Motor neuron (in vitro differentiated cells): ENCODE measurements at regions of chr1 and their contacts with region 1.

Region 1: DNA sequence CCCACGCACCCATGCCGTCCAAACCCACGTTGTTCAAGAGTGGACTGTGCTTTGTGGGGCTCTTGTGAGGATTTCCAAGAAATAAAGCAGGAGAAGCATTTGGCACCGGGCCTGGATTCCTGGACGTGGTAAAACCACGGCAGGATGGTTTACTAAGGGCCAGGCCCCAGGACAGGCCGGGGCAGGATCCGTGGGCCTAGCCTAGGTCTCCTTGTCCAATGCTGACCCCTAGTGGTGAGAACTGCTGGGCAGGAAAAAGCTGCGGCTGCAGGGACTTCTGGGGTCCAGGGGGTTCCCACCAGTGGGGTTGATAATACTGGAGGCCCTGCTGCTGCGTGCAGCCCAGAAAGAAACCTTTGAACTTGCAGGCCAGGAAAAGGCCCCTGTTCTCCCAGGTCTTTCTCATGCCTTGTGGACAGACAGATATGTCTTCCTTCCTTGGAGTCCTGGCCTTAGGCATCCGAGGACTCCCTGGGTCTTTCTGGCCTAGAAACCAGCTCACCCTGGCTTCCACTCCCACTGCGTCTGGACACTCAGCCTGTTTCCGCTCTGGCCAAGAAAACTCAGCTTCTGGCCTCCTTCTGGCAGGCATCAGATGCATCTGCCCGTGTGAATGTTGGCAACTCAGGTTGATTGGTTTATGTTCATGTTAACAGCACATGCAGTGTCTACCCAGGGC is 106.9 kb upstream of the TMEM51 start:
- ATAC-seq: peak; percentile 83 to 92 (median 88)
- H3K4me3 ChIP-seq: no peak overlapping the region
- H3K27ac ChIP-seq: no peak overlapping the region
- H3K4me1 ChIP-seq: peaks cover 0 to 14% of the 10 kb centered on the region in 2 donors

Region 2: DNA sequence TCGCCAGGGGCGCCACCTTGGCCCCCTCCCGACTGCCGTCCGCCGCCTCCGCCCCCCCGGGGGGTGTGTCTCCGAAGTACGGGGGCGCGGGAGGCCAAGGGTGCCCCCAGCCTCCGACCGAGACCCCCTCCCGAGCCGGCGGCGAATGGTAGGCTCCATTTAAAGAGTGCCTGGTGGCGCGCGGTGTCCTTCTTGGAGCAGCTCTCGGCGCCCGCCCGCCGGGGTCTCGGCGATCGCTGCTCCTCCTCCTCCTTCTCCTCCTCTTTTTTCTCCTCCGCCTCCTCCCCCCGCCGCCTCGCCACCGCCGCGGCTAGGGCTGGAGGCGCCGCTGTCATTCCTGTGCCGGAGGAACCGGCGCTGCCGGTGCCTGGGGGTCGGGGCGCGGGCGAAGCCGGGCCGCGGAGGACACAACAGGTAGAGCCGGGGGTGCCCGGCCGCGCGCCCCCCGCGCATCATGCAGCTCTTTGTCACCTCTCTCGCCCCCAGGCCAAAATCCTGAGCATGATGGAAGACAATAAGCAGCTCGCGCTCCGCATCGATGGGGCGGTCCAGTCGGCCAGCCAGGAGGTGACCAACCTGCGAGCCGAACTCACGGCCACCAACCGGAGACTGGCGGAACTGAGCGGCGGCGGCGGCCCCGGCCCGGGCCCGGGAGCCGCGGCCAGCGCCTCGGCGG is 448.0 kb before region 1 on chr1 and contains the start of gene KAZN:
- in situ Hi-C with region 1: loop called in 2 of 9 experiments (anchors 25 kb)
- ATAC-seq: peak; percentile 48 to 78 (median 70)
- H3K4me3 ChIP-seq: peak within 1 kb of the TSS; percentile 73 to 90 (median 89)
- H3K27ac ChIP-seq: peak within 1 kb of the TSS; percentile 93 to 99
- H3K4me1 ChIP-seq: peaks cover 25 to 41% of the 10 kb centered on the region in 2 donors
- total RNA-seq, gene KAZN: 16.9 to 31.4 (median 21.4) TPM

Region 3: DNA sequence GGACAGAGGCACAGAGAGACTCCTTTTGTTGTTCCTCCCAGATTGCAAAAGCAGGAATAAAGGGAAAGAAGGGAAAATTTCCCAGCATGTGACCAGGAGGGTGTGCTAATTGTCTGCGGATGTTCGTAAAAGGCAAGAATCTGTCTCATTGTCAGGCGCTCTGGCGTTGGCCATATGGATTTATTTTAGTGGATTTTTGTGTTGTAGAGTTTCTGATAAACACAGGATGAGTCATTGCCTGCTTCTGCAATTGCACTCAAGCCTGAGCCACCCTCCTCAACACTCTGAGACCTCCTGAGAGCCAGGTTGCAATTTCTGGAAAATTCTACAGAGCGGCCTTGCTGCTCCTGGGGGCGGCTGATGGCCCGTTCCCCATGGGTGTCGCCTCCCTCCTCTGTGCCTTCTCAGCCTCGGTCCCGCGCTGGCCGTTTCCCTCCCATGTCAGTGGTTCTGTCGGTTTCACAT is 220.4 kb before region 1 on chr1:
- in situ Hi-C with region 1: loop called in 1 of 9 experiments (anchors 25 kb)
- ATAC-seq: peak; percentile 88 to 96 (median 94)
- H3K4me3 ChIP-seq: no peak overlapping the region
- H3K27ac ChIP-seq: peak overlapping the region in 1 of 2 donors; percentile 16
- H3K4me1 ChIP-seq: peaks cover 7% of the 10 kb centered on the region in 2 donors